ENCODE measurements at regions of chr1 and their contacts with region 1.

Region 1: GRCh38 chr1:150186789-150187559 is 37.3 kb downstream of the PLEKHO1 start:
- DNase-seq: peak; percentile 86
- ATAC-seq: peak; percentile 79
- H3K4me3 ChIP-seq: peak overlapping the region in 4 of 5 experiments; percentile 18 to 54 (median 41)
- H3K4me3 Mint-ChIP-seq: peak overlapping the region; percentile 92
- H3K27ac ChIP-seq: peak overlapping the region; percentile 25 to 65
- H3K27ac Mint-ChIP-seq: peak overlapping the region; percentile 94
- H3K4me1 ChIP-seq: peaks cover 4 to 16% of the 10 kb centered on the region in 2 donors
- H3K4me1 Mint-ChIP-seq: peaks cover 16% of the 10 kb centered on the region
- H3K27me3 ChIP-seq: no peaks in the 10 kb centered on the region
- H3K27me3 Mint-ChIP-seq: no peaks in the 10 kb centered on the region
- CTCF ChIP-seq: peak; percentile 81

Region 2: GRCh38 chr1:149886396-149887195 is 300.4 kb before region 1 on chr1:
- CTCF ChIA-PET with region 1: interaction called, 14 read pairs
- POLR2A ChIA-PET with region 1: interaction called, 21 read pairs
- intact Hi-C with region 1: no loop called
- DNase-seq: peak; percentile 98
- ATAC-seq: peak; percentile 73
- H3K4me3 ChIP-seq: peak overlapping the region; percentile 84 to 97 (median 92)
- H3K4me3 Mint-ChIP-seq: no peak overlapping the region
- H3K27ac ChIP-seq: peak overlapping the region; percentile 89 to 94
- H3K27ac Mint-ChIP-seq: no peak overlapping the region
- H3K4me1 ChIP-seq: peaks cover 23 to 33% of the 10 kb centered on the region in 2 donors
- H3K4me1 Mint-ChIP-seq: peaks cover 11% of the 10 kb centered on the region
- H3K27me3 ChIP-seq: no peaks in the 10 kb centered on the region
- H3K27me3 Mint-ChIP-seq: no peaks in the 10 kb centered on the region
- CTCF ChIP-seq: no peak

Region 3: DNA sequence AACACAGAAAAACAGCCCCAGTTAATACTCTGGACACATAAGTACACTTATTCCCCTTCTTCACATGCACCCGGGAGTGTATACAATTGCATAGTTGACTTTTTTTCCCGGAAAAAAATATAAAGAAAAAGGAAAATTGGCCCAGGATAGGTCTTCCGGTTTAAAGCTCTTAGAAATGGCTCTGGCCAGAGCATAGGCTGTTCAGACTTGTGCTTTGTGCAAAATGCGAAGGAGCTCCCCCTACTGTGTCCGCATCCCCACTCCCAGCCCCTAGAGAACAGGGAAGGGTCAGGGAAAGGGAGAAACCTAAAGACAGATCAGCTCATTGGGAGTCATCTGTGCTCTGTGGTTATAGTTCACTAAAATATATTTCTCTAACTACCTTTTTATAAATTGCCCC is 244.8 kb before region 1 on chr1:
- CTCF ChIA-PET with region 1: no interaction called
- POLR2A ChIA-PET with region 1: no interaction called
- intact Hi-C with region 1: no loop called
- DNase-seq: no peak
- ATAC-seq: no peak
- H3K4me3 ChIP-seq: no peak overlapping the region
- H3K4me3 Mint-ChIP-seq: no peak overlapping the region
- H3K27ac ChIP-seq: no peak overlapping the region
- H3K27ac Mint-ChIP-seq: no peak overlapping the region
- H3K4me1 ChIP-seq: no peaks in the 10 kb centered on the region
- H3K4me1 Mint-ChIP-seq: no peaks in the 10 kb centered on the region
- H3K27me3 ChIP-seq: peaks cover 0 to 3% (median 0%) of the 10 kb centered on the region in 4 experiments
- H3K27me3 Mint-ChIP-seq: peaks cover 2% of the 10 kb centered on the region
- CTCF ChIP-seq: no peak

Region 4: DNA sequence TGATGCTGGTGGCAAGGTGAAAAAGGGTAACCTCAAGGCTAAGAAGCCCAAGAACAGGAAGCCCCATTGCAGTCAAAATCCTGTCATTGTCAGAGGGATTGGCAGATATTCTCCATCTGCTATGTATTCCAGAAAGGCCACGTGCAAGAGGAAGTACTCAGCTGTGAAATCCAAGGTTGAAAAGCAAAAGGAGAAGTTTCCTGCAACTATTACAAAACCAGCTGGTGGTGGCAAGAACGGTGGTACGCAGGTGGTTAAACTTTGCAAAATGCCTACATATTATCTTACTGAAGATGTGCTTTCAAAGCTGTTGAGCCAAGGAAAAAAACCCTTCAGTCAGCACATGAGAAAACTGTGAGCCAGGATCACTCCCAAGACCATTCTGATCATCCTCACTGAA is 133.0 kb before region 1 on chr1:
- CTCF ChIA-PET with region 1: interaction called, 11 read pairs
- POLR2A ChIA-PET with region 1: no interaction called
- intact Hi-C with region 1: loop called (anchors 1 kb)
- DNase-seq: no peak
- ATAC-seq: no peak
- H3K4me3 ChIP-seq: no peak overlapping the region
- H3K4me3 Mint-ChIP-seq: peak overlapping the region; percentile 10
- H3K27ac ChIP-seq: no peak overlapping the region
- H3K27ac Mint-ChIP-seq: no peak overlapping the region
- H3K4me1 ChIP-seq: peaks cover 8% of the 10 kb centered on the region in 2 donors
- H3K4me1 Mint-ChIP-seq: peaks cover 20% of the 10 kb centered on the region
- H3K27me3 ChIP-seq: no peaks in the 10 kb centered on the region
- H3K27me3 Mint-ChIP-seq: no peaks in the 10 kb centered on the region
- CTCF ChIP-seq: no peak

Region 5: GRCh38 chr1:150072959-150073358 is 114.0 kb before region 1 on chr1:
- CTCF ChIA-PET with region 1: interaction called, 263 read pairs
- POLR2A ChIA-PET with region 1: interaction called, 11 read pairs
- intact Hi-C with region 1: loop called (anchors 1 kb)
- DNase-seq: peak; percentile 58
- ATAC-seq: peak; percentile 78
- H3K4me3 ChIP-seq: no peak overlapping the region
- H3K4me3 Mint-ChIP-seq: no peak overlapping the region
- H3K27ac ChIP-seq: no peak overlapping the region
- H3K27ac Mint-ChIP-seq: peak overlapping the region; percentile 64
- H3K4me1 ChIP-seq: peaks cover 0 to 14% of the 10 kb centered on the region in 2 donors
- H3K4me1 Mint-ChIP-seq: peaks cover 37% of the 10 kb centered on the region
- H3K27me3 ChIP-seq: no peaks in the 10 kb centered on the region
- H3K27me3 Mint-ChIP-seq: no peaks in the 10 kb centered on the region
- CTCF ChIP-seq: peak; percentile 78

Region 6: DNA sequence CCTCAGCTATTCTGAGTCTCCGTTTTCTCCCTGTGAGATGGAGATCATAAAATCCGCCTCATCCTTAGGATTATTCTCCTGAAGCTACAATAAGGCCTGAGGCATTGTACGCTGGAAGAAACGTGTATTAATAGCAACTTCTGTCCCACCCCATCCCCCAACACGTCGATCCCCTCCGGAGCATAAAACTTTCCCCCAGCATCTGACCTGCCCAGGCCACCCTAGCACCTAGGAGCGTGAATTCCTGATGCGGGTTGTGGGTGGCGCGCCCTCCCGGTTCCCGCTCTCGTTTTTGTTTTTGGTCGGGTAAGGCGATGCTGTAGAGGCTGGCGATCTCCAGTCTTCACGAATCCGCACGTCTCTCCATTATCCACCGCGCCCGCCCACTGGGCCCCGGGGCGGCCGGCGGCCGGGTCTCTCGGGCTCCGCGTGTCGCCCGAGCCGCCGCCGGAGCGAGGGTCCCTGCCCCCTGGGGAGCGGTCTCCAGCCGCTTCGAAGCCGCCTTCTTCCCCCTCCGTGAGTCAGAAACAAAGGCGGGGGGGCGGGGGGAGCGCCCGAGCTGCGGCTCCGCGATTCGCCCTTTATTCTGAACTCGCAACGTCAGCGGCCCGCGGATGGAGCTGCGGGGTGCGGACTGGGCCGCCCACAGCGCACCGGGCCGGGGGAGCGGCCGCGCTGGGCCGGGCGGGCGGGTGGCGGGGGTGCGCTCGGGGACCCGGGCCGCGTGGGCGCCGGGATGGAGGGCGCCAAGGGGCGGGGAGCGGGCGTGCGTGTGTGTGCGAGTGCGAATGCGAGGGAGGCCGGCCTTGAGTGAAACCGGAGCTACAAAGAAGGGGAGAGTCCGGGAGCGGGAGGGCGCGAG is 37.5 kb before region 1 on chr1 and contains the start of gene PLEKHO1:
- CTCF ChIA-PET with region 1: interaction called, 18 read pairs
- POLR2A ChIA-PET with region 1: interaction called, 20 read pairs
- intact Hi-C with region 1: no loop called
- DNase-seq: peak; percentile 92
- ATAC-seq: peak; percentile 78
- H3K4me3 ChIP-seq: peak within 1 kb of the TSS; percentile 73 to 96 (median 94)
- H3K4me3 Mint-ChIP-seq: peak within 1 kb of the TSS; percentile 98
- H3K27ac ChIP-seq: peak within 1 kb of the TSS; percentile 80 to 95
- H3K27ac Mint-ChIP-seq: peak within 1 kb of the TSS; percentile 99
- H3K4me1 ChIP-seq: peaks cover 52 to 56% of the 10 kb centered on the region in 2 donors
- H3K4me1 Mint-ChIP-seq: peaks cover 68% of the 10 kb centered on the region
- H3K27me3 ChIP-seq: no peaks in the 10 kb centered on the region
- H3K27me3 Mint-ChIP-seq: no peaks in the 10 kb centered on the region
- CTCF ChIP-seq: no peak
- total RNA-seq, gene PLEKHO1: 182 and 186 TPM in 2 replicates

Region 7: GRCh38 chr1:150168960-150169601 is 17.9 kb before region 1 on chr1:
- CTCF ChIA-PET with region 1: interaction called, 100 read pairs
- POLR2A ChIA-PET with region 1: interaction called, 15 read pairs
- intact Hi-C with region 1: loop called (anchors 1 kb)
- DNase-seq: peak; percentile 68
- ATAC-seq: peak; percentile 59
- H3K4me3 ChIP-seq: no peak overlapping the region
- H3K4me3 Mint-ChIP-seq: no peak overlapping the region
- H3K27ac ChIP-seq: no peak overlapping the region
- H3K27ac Mint-ChIP-seq: no peak overlapping the region
- H3K4me1 ChIP-seq: peaks cover 27 to 35% of the 10 kb centered on the region in 2 donors
- H3K4me1 Mint-ChIP-seq: peaks cover 29% of the 10 kb centered on the region
- H3K27me3 ChIP-seq: no peaks in the 10 kb centered on the region
- H3K27me3 Mint-ChIP-seq: no peaks in the 10 kb centered on the region
- CTCF ChIP-seq: peak; percentile 58

Region 8: DNA sequence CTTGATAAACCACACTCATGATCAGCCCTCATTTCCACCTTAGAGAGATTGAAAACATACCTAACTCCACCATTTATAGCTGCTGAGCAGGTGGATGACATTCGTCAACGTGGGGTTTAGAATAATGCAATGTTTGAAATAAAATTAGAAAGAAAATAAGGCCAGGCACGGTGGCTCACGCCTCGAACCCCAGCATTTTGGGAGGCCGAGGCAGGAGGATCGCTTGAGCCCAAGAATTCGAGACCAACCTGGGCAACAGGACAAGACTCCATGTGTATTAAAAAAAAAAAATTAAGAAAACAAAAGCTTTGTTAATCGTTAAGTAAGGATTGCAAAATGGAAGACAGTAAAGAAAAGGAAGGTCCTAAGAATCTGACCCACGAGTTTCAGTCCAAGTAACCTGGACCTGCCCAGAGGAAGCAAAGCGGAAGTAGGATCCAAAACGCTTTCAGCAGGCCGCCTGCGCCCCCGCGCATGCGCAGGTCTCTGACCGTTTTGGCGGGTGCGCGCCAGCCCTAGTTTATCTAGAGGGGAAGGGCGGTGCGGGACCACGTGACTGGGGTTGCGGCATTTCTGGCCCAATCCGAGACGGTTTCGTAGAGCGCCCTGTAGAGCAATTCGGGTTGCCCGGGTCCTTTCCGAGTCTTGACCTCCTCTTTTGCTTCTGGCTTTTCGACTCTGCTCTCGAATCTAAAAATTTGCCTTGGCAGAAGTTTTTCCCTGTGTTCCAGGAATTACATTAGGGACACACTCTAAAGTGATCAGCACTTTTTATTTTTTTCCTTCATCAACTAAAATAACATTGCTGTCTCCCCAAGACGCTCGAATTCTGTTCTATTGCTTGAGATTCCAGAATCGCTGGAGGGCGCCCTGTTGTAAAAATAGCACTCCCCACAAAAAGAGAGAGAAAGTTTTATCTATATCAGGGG is 26.5 kb after region 1 on chr1:
- CTCF ChIA-PET with region 1: interaction called, 3 read pairs
- POLR2A ChIA-PET with region 1: interaction called, 4 read pairs
- intact Hi-C with region 1: loop called (anchors 1 kb)
- DNase-seq: peak; percentile 94
- ATAC-seq: peak; percentile 99
- H3K4me3 ChIP-seq: peak overlapping the region; percentile 51 to 89 (median 70)
- H3K4me3 Mint-ChIP-seq: peak overlapping the region; percentile 93
- H3K27ac ChIP-seq: peak overlapping the region; percentile 73 to 74
- H3K27ac Mint-ChIP-seq: peak overlapping the region; percentile 95
- H3K4me1 ChIP-seq: peaks cover 6 to 13% of the 10 kb centered on the region in 2 donors
- H3K4me1 Mint-ChIP-seq: peaks cover 16% of the 10 kb centered on the region
- H3K27me3 ChIP-seq: no peaks in the 10 kb centered on the region
- H3K27me3 Mint-ChIP-seq: no peaks in the 10 kb centered on the region
- CTCF ChIP-seq: peak; percentile 60

Region 9: DNA sequence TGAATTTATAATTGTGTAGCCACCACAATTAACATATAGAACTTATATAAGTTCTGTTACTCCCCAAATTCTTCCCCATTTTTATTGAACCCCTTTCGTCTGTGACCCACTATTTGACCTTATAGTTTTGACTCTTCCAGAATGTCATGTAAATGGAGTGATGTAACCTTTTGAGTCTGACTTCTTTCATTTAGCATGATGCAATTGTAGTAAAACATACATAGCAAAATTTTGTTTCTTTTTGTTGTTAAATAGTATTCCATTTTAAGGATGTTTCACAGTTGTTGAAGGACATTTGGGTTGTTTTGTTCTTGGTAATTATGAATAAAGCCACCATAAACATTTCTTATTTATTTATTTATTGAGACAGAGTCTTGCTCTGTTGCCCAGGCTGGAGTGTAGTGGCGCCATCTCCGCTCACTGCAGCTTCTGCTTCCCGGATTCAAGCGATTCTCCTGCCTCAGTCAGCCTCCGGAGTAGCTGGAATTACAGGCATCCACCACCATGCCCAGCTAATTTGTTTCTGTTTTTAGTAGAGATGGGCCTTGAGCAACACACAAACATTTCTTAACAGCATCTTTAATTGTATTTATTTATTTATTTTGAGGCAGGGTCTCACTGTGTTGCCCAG is 210.5 kb after region 1 on chr1:
- CTCF ChIA-PET with region 1: no interaction called
- POLR2A ChIA-PET with region 1: no interaction called
- intact Hi-C with region 1: no loop called
- DNase-seq: no peak
- ATAC-seq: no peak
- H3K4me3 ChIP-seq: no peak overlapping the region
- H3K4me3 Mint-ChIP-seq: no peak overlapping the region
- H3K27ac ChIP-seq: no peak overlapping the region
- H3K27ac Mint-ChIP-seq: no peak overlapping the region
- H3K4me1 ChIP-seq: no peaks in the 10 kb centered on the region
- H3K4me1 Mint-ChIP-seq: peaks cover 28% of the 10 kb centered on the region
- H3K27me3 ChIP-seq: no peaks in the 10 kb centered on the region
- H3K27me3 Mint-ChIP-seq: no peaks in the 10 kb centered on the region
- CTCF ChIP-seq: no peak